Activated B cell treated with CpG ODN at 0.5 μM for 24 hours (primary cell): ENCODE measurements at regions of chr11 and their contacts with region 1.

Region 1: GRCh38 chr11:6646918-6647679 is 8.5 kb downstream of the DCHS1 start:
- DNase-seq: peak; percentile 35
- ATAC-seq: peak; percentile 90
- H3K4me3 Mint-ChIP-seq: no peak overlapping the region
- H3K27ac Mint-ChIP-seq: no peak overlapping the region
- H3K4me1 Mint-ChIP-seq: no peaks in the 10 kb centered on the region
- H3K27me3 Mint-ChIP-seq: no peaks in the 10 kb centered on the region
- CTCF ChIP-seq: no peak

Region 2: DNA sequence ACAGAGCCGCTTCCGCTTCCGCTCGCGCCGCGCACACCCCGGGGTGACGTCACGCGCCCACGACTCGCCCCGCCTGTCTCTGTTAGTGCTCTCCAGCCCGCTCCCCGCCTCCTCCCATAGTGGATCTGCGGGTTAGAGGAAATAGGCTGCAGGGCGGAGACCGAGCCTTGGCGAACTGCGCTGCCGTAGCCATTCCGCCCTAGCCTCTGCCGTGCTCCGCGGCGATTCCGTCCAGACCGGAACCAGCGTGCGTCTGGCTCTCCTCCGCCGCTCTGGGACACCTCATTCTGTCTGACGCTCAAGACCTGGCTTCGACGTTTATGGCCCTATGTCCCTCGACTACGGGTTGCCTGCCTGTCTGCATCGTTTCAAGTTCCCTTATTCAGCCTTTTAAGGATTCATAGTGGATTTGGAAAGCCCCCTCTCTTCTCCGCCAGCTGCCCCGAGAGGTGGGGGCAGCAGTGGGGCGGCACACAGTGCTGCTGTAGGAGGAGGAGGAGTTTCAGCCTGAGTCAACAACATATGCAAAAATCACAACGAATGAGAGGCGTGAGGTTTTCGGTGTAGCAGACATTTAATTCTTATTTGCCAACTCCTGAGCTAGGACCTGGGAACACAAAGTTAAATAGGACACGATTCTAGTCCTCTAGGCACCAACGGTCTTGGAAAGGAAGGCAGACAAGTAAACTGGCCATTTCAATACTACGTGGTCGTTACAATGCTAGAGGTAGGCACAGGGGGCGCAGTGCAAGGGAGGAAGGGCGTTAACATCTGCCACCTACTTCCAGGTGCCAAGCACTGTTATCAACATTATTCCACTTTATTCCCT is 34.7 kb before region 1 on chr11 and contains the start of gene TAF10:
- CTCF ChIA-PET with region 1: no interaction called
- POLR2A ChIA-PET with region 1: interaction called, 30 read pairs
- intact Hi-C with region 1: no loop called
- DNase-seq: peak; percentile 92
- ATAC-seq: peak; percentile 83
- H3K4me3 Mint-ChIP-seq: peak within 1 kb of the TSS; percentile 85
- H3K27ac Mint-ChIP-seq: peak within 1 kb of the TSS; percentile 85
- H3K4me1 Mint-ChIP-seq: peaks cover 29% of the 10 kb centered on the region
- H3K27me3 Mint-ChIP-seq: no peaks in the 10 kb centered on the region
- CTCF ChIP-seq: no peak
- total RNA-seq, gene TAF10: 149 and 154 TPM in 2 replicates

Region 3: DNA sequence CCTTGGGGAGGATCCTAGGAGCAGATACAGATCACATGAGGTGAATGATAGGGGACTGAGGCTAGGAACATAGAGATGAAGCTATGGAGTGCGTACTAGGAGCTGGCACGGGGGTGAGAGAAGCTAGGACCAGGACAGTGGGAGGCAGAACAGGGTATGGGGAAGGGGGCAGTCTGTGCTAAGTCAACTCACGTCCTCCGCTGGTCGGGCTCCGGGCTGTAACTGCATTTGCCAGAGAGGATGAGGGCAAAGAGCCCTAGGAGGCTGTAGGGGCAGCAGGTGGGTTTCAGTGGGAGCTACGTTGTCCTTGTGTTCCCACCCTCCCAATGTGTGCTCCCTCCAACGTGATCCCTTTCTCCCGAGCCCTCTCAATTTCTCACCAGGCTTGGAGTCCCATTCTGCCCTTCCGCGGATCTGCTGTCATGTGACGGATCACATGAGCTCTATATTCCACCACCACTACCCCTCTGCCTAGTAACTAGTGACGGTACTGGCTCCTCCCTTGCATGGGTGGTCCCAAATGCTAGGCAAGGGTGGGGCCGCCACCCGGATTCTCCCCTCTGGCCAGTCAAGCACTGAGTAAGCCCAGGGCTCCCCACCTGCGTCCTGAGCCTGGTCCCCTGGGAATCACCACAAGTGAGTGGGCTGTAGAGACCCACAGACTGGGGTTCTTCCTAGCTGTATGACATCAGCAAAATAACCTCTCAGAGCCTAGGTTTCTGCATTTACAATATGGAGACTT is 27.9 kb before region 1 on chr11 and contains the start of gene TPP1:
- CTCF ChIA-PET with region 1: interaction called, 4 read pairs
- POLR2A ChIA-PET with region 1: interaction called, 41 read pairs
- intact Hi-C with region 1: loop called (anchors 1 kb)
- DNase-seq: peak; percentile 87
- ATAC-seq: peak; percentile 89
- H3K4me3 Mint-ChIP-seq: no peak within 1 kb of the TSS
- H3K27ac Mint-ChIP-seq: no peak within 1 kb of the TSS
- H3K4me1 Mint-ChIP-seq: peaks cover 7% of the 10 kb centered on the region
- H3K27me3 Mint-ChIP-seq: no peaks in the 10 kb centered on the region
- CTCF ChIP-seq: no peak
- total RNA-seq, gene TPP1: 98.2 and 123 TPM in 2 replicates

Region 4: GRCh38 chr11:6627762-6628241 is 19.3 kb before region 1 on chr11:
- CTCF ChIA-PET with region 1: no interaction called
- POLR2A ChIA-PET with region 1: interaction called, 3 read pairs
- intact Hi-C with region 1: loop called (anchors 2 kb)
- DNase-seq: no peak
- ATAC-seq: peak; percentile 67
- H3K4me3 Mint-ChIP-seq: no peak overlapping the region
- H3K27ac Mint-ChIP-seq: peak overlapping the region; percentile 24
- H3K4me1 Mint-ChIP-seq: peaks cover 20% of the 10 kb centered on the region
- H3K27me3 Mint-ChIP-seq: no peaks in the 10 kb centered on the region
- CTCF ChIP-seq: no peak

Region 5: DNA sequence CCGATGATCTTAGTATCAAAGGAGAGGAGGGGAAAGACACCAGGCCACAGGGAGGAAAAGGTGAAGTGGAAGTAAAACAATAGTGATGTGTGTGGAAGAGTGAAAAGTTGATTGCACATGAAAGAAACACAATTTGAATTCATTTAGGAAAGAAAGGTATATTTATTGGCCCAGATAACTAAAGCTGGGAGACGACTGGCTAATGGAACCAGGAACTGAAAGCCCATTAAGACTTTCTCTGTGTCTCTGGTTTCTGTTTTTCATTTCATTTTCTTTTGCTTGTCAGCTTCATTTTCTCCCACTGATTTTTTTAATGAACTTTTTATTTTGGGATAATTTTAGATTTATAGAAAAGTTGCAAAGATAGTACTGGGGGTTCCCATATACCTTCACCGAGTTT is 13.6 kb after region 1 on chr11:
- CTCF ChIA-PET with region 1: no interaction called
- POLR2A ChIA-PET with region 1: interaction called, 4 read pairs
- intact Hi-C with region 1: loop called (anchors 2 kb)
- DNase-seq: no peak
- ATAC-seq: no peak
- H3K4me3 Mint-ChIP-seq: no peak overlapping the region
- H3K27ac Mint-ChIP-seq: no peak overlapping the region
- H3K4me1 Mint-ChIP-seq: peaks cover 3% of the 10 kb centered on the region
- H3K27me3 Mint-ChIP-seq: peaks cover 6% of the 10 kb centered on the region
- CTCF ChIP-seq: no peak

Region 6: GRCh38 chr11:6693342-6694228 is 46.5 kb after region 1 on chr11:
- CTCF ChIA-PET with region 1: no interaction called
- POLR2A ChIA-PET with region 1: no interaction called
- intact Hi-C with region 1: no loop called
- DNase-seq: no peak
- ATAC-seq: no peak
- H3K4me3 Mint-ChIP-seq: no peak overlapping the region
- H3K27ac Mint-ChIP-seq: no peak overlapping the region
- H3K4me1 Mint-ChIP-seq: no peaks in the 10 kb centered on the region
- H3K27me3 Mint-ChIP-seq: no peaks in the 10 kb centered on the region
- CTCF ChIP-seq: no peak

Region 7: DNA sequence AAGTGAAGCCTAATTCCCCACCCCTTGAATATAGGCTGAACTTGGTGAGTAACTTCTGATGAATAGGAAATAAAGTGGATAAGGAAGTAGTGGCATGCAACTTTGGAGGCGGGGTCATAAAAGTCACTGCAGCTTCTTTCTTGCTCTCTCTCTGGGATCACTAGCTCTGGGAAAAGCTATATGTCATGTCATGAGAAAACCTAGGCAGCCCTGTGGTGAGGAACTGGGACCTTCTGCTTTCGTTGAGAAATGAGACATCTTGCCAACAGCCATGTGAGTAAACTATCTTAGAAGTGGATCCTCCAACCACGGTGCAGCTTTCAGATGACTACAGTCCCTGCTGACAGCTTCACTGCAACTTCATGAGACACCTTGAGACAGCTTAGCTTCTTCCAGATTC is 357.4 kb after region 1 on chr11:
- CTCF ChIA-PET with region 1: no interaction called
- POLR2A ChIA-PET with region 1: no interaction called
- intact Hi-C with region 1: no loop called
- DNase-seq: no peak
- ATAC-seq: no peak
- H3K4me3 Mint-ChIP-seq: no peak overlapping the region
- H3K27ac Mint-ChIP-seq: no peak overlapping the region
- H3K4me1 Mint-ChIP-seq: no peaks in the 10 kb centered on the region
- H3K27me3 Mint-ChIP-seq: no peaks in the 10 kb centered on the region
- CTCF ChIP-seq: no peak